Motor neuron (in vitro differentiated cells): ENCODE measurements at regions of chr9 and their contacts with region 1.

Region 1: GRCh38 chr9:80382211-80382891 is 810.6 kb downstream of the TLE4 start:
- ATAC-seq: no peak
- H3K4me3 ChIP-seq: no peak overlapping the region
- H3K27ac ChIP-seq: no peak overlapping the region
- H3K4me1 ChIP-seq: peaks cover 0 to 13% of the 10 kb centered on the region in 2 donors

Region 2: DNA sequence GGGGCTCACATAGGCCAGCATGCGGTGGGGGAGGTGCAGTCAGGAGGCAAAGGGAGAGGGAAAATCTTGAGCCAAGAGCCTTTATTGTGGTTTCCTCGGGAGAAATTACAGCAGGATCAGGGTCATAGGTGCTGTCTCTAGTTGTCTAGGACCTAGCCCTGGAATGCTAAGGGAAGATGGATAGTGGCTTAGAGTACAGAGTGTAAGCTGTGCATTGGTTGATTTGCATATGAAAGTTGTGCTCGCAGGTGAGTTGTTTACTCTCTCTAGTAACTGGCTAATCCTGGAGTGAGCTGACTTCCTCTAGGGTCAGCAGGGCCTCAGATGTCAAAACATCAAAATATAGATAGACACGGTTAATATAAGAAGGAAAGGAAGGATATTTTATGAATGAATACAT is 67.2 kb after region 1 on chr9:
- in situ Hi-C with region 1: no loop called
- ATAC-seq: no peak
- H3K4me3 ChIP-seq: no peak overlapping the region
- H3K27ac ChIP-seq: no peak overlapping the region
- H3K4me1 ChIP-seq: peaks cover 2 to 6% of the 10 kb centered on the region in 2 donors

Region 3: DNA sequence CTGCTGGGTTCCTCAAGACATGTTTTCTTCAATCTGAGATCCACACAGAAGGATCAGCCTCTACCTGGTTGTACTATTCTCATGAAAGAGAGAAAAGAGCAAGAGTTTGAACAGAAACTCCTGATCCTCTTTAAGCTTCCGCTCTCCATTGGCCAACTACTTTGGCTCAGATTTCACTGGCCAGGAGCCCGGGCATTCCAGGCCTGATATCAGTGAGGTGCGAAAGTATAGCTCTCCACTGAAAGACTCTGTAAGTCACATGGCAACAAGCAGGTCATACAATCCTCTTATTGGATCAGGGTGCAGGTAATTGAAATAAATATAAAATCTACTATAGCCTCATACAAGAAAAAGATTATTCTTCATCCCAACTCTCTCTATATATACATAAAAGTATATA is 109.9 kb after region 1 on chr9:
- in situ Hi-C with region 1: loop called in 1 of 9 experiments (anchors 25 kb)
- ATAC-seq: peak in 1 of 8 experiments; percentile 22
- H3K4me3 ChIP-seq: no peak overlapping the region
- H3K27ac ChIP-seq: no peak overlapping the region
- H3K4me1 ChIP-seq: peaks cover 9 to 16% of the 10 kb centered on the region in 2 donors